ENCODE measurements at regions of chr3 and their contacts with region 1.

Region 1: DNA sequence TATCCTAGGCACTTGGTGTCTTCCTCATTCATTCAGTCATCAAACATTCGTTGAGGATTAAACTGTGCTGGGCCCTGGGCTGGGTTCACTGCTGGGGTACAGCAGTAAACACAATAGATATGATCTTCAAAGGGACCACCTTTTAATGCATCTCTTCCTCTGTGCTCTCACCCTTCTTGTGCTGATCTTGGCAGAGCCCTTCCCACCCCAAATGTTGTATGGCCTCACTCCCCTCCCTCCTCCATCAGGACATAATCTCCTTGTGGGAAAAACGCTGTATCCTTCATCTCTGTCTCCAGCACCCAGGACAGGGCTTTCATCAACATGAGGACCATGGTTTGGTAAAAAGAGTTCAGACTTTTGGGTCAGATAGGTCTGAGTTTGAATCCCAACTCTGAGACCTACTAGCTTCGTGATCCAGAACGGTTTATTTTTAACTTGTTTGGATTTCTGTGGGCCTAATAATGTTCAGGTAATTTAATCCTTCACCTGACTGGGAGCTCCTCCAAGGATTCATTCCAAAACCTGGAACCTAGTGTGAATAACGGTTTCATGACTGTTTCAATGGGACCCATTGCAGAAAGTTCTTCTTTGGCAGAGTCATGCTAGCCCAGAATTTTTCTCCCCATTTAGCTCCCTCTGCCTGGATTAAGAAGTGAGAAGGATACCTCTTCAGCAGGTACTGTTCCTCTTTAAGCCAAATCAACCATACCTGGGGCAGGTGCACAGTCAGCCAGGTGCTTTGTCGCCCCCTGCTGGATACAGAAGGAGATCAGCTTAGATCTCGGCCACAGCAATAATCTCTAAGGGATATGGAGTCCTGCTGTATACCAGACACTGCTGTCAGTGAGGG is 5.2 kb upstream of the WNT7A start:
- DNase-seq: peak; percentile 83
- H3K4me3 Mint-ChIP-seq: no peak overlapping the region
- H3K27ac Mint-ChIP-seq: no peak overlapping the region
- H3K4me1 Mint-ChIP-seq: no peaks in the 10 kb centered on the region
- H3K27me3 Mint-ChIP-seq: peaks cover 75% of the 10 kb centered on the region
- CTCF ChIP-seq: peak; percentile 79

Region 2: DNA sequence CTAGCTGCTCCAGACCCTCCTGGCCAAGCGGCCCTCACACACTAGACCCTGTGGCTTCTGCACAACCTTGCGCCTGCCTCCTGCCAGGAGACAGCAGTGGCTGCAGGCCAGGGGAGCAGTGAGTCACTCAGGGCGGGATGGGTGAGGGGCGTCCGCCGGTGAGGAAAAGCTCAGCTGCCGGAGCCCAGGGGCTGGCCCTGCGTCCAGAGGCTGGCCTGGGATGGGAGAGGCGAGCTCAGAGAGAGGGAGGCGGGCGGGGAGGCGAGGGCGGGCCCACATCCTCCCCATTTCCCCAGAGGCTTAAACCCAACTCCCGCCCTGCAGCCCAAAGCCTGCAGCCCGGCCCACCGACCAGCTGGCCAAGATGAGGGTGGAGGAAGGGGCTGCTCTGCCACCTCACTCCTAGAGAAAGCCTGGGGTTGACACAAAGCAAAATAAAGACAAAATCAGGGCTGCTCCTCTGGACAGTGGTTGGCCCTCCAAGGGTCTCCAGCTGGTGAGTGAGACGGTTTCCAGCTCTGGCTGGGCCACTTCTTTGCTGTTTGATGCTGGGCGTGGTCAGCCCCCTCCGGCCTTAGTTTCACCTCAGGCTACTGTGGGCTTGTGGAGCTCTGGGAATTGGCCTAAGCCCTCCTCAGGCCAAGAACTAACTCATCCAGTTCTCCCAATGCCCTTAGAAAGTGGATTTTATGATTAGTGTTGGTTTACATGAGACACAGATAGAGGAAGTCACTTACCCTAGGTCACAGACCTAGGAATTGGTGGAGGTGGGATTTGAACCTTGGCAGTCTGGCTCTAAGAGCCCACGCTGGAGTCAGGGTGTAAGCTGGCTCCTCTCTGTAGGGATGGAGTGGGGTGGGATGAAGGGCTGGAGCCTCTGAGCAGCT is 862.5 kb before region 1 on chr3:
- CTCF ChIA-PET with region 1: no interaction called
- intact Hi-C with region 1: no loop called
- DNase-seq: peak; percentile 81
- H3K4me3 Mint-ChIP-seq: peak overlapping the region; percentile 57
- H3K27ac Mint-ChIP-seq: no peak overlapping the region
- H3K4me1 Mint-ChIP-seq: peaks cover 55% of the 10 kb centered on the region
- H3K27me3 Mint-ChIP-seq: peaks cover 5% of the 10 kb centered on the region
- CTCF ChIP-seq: no peak

Region 3: GRCh38 chr3:13495921-13496723 is 389.0 kb before region 1 on chr3:
- CTCF ChIA-PET with region 1: no interaction called
- intact Hi-C with region 1: loop called (anchors 10 kb)
- DNase-seq: peak; percentile 76
- H3K4me3 Mint-ChIP-seq: no peak overlapping the region
- H3K27ac Mint-ChIP-seq: no peak overlapping the region
- H3K4me1 Mint-ChIP-seq: no peaks in the 10 kb centered on the region
- H3K27me3 Mint-ChIP-seq: no peaks in the 10 kb centered on the region
- CTCF ChIP-seq: peak; percentile 84

Region 4: GRCh38 chr3:13657660-13658435 is 227.2 kb before region 1 on chr3:
- CTCF ChIA-PET with region 1: interaction called, 51 read pairs
- intact Hi-C with region 1: loop called (anchors 1 kb)
- DNase-seq: peak; percentile 80
- H3K4me3 Mint-ChIP-seq: no peak overlapping the region
- H3K27ac Mint-ChIP-seq: no peak overlapping the region
- H3K4me1 Mint-ChIP-seq: peaks cover 11% of the 10 kb centered on the region
- H3K27me3 Mint-ChIP-seq: peaks cover 37% of the 10 kb centered on the region
- CTCF ChIP-seq: peak; percentile 86